Endothelial cell of umbilical vein (primary cell): ENCODE measurements at regions of chr12 and their contacts with region 1.

Region 1: GRCh38 chr12:4320853-4321701 is at the start of gene TIGAR:
- DNase-seq: peak; percentile 96
- H3K4me3 ChIP-seq: peak within 1 kb of the TSS; percentile 82 to 97 (median 97)
- H3K27ac ChIP-seq: peak within 1 kb of the TSS; percentile 78
- H3K4me1 ChIP-seq: peaks cover 12% of the 10 kb centered on the region
- H3K27me3 ChIP-seq: peaks cover 0 to 2% of the 10 kb centered on the region in 2 experiments
- CTCF ChIP-seq: no peak
- POLR2A ChIP-seq: peak; percentile 94
- total RNA-seq, gene TIGAR: 31.2 and 36.3 TPM in 2 replicates

Region 2: DNA sequence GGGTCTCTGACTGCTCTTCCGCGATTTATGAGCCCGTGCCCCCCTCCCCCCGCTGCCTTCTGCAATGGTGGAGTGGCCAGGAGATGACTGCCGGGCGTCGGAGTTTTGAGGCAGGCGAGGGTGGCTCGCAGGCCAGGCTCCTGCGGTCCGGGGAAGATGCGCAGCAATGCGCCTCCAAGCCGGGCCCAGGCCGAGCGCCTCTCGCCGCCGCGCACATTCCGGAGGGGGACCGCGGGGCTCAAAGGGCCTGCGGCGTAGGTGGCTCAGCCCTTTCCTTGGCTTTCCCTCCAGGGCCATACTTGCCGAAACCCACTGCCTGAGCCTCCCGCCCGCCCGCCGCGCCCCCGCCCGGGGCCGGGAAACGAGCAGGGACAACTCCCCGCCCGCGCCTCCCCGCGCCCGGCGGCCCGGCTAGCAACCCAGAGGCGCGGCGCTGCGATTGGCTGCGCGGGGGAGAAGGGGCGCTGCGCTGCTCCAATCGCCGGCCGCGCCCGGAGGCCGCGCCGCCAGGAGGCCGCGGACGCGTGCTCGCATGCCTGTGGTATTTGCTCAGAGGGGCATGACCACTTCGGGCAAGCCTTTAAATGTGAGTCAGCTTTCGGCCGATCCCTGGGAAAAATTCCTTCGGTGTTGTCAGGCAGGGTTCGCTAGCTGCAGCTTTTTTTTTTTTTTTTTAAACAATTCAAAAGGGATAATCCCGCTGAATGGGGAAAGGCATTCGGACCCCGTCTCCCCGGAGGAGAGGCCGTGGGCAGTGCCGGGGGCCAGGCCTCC is 290.0 kb before region 1 on chr12:
- CTCF ChIA-PET with region 1: no interaction called
- POLR2A ChIA-PET with region 1: no interaction called
- dilution Hi-C with region 1: no loop called
- intact Hi-C with region 1: loop called (anchors 2 kb)
- DNase-seq: peak; percentile 90
- H3K4me3 ChIP-seq: peak overlapping the region in 1 of 3 experiments; percentile 40
- H3K27ac ChIP-seq: no peak overlapping the region
- H3K4me1 ChIP-seq: no peaks in the 10 kb centered on the region
- H3K27me3 ChIP-seq: peaks cover 0 to 2% of the 10 kb centered on the region in 2 experiments
- CTCF ChIP-seq: no peak
- POLR2A ChIP-seq: no peak

Region 3: GRCh38 chr12:4118017-4118510 is 203.0 kb before region 1 on chr12:
- CTCF ChIA-PET with region 1: no interaction called
- POLR2A ChIA-PET with region 1: no interaction called
- dilution Hi-C with region 1: no loop called
- intact Hi-C with region 1: no loop called
- DNase-seq: no peak
- H3K4me3 ChIP-seq: no peak overlapping the region
- H3K27ac ChIP-seq: no peak overlapping the region
- H3K4me1 ChIP-seq: no peaks in the 10 kb centered on the region
- H3K27me3 ChIP-seq: no peaks in the 10 kb centered on the region
- CTCF ChIP-seq: no peak
- POLR2A ChIP-seq: no peak

Region 4: GRCh38 chr12:4269279-4269991 is 51.6 kb before region 1 on chr12:
- CTCF ChIA-PET with region 1: no interaction called
- POLR2A ChIA-PET with region 1: no interaction called
- dilution Hi-C with region 1: no loop called
- intact Hi-C with region 1: loop called (anchors 1 kb)
- DNase-seq: peak; percentile 65
- H3K4me3 ChIP-seq: peak overlapping the region; percentile 31 to 61 (median 44)
- H3K27ac ChIP-seq: no peak overlapping the region
- H3K4me1 ChIP-seq: peaks cover 41% of the 10 kb centered on the region
- H3K27me3 ChIP-seq: peaks cover 52 to 77% of the 10 kb centered on the region in 2 experiments
- CTCF ChIP-seq: peak in 1 of 2 donors; percentile 21
- POLR2A ChIP-seq: peak; percentile 39

Region 5: GRCh38 chr12:4402996-4403395 is 81.9 kb after region 1 on chr12:
- CTCF ChIA-PET with region 1: no interaction called
- POLR2A ChIA-PET with region 1: no interaction called
- dilution Hi-C with region 1: no loop called
- intact Hi-C with region 1: no loop called
- DNase-seq: no peak
- H3K4me3 ChIP-seq: no peak overlapping the region
- H3K27ac ChIP-seq: no peak overlapping the region
- H3K4me1 ChIP-seq: no peaks in the 10 kb centered on the region
- H3K27me3 ChIP-seq: no peaks in the 10 kb centered on the region
- CTCF ChIP-seq: no peak
- POLR2A ChIP-seq: no peak

Region 6: GRCh38 chr12:4538207-4539160 is 217.4 kb after region 1 on chr12 and contains the start of gene RAD51AP1:
- CTCF ChIA-PET with region 1: no interaction called
- POLR2A ChIA-PET with region 1: no interaction called
- dilution Hi-C with region 1: no loop called
- intact Hi-C with region 1: loop called (anchors 5 kb)
- DNase-seq: peak; percentile 98
- H3K4me3 ChIP-seq: peak within 1 kb of the TSS; percentile 76 to 99 (median 97)
- H3K27ac ChIP-seq: peak within 1 kb of the TSS; percentile 98
- H3K4me1 ChIP-seq: peaks cover 23% of the 10 kb centered on the region
- H3K27me3 ChIP-seq: no peaks in the 10 kb centered on the region
- CTCF ChIP-seq: no peak
- POLR2A ChIP-seq: peak; percentile 18
- total RNA-seq, gene RAD51AP1: 23.1 and 23.4 TPM in 2 replicates

Region 7: DNA sequence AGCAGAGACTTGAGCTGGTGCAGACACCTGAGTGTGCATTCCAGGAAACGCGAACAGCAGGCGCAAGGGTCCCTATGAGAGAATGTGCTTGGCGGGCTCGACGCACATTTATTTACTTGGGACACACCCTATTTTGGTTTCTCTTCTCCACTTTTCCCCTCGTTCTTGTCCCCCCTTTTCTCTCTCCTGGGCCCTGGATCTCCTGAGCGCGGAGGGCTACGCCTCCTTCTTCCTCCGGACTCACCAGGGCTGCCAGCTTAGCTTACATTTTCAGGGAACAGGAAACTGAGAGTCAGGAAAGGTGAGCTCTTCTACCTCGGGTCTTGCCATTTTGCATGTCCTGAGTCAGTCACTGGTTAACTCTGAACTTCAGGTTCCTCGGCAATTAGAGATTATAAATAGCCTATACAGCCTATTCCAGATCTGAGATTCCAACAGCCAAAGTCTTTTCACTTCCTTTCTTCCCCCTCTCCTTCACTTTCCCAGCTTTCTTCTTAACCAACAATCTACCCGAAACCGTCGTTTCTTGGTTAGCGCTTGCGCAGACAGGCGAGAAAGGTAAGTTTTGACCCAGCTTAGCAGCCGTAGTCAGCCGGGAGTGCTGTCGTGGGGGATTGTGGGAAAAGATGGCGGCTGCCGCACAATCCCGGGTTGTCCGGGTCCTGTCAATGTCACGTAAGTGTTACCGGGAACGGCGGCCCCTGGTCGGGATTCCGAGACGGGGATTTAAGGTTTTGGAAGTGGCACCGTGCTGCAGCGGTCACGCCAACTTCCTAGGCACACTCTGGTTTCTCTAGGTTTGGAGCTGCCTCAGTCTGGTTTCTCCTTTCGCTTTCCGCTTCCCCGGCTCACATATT is 327.7 kb after region 1 on chr12 and contains the starts of genes AKAP3 and NDUFA9:
- CTCF ChIA-PET with region 1: no interaction called
- POLR2A ChIA-PET with region 1: no interaction called
- dilution Hi-C with region 1: no loop called
- intact Hi-C with region 1: loop called (anchors 1 kb)
- DNase-seq: peak; percentile 93
- H3K4me3 ChIP-seq: peak within 1 kb of the TSS; percentile 58 to 97 (median 96)
- H3K27ac ChIP-seq: peak within 1 kb of the TSS; percentile 79
- H3K4me1 ChIP-seq: peaks cover 16% of the 10 kb centered on the region
- H3K27me3 ChIP-seq: no peaks in the 10 kb centered on the region
- CTCF ChIP-seq: no peak
- POLR2A ChIP-seq: peak; percentile 73
- total RNA-seq, gene AKAP3: 0.62 TPM in 1 of 2 replicates, not detected in the other
- total RNA-seq, gene NDUFA9: 113 and 115 TPM in 2 replicates